Astrocyte of the cerebellum (primary cell): ENCODE measurements at regions of chr4 and their contacts with region 1.

Region 1: GRCh38 chr4:78268597-78268996 is 211.5 kb downstream of the FRAS1 start:
- DNase-seq: no peak
- H3K4me3 ChIP-seq: no peak overlapping the region
- CTCF ChIP-seq: no peak

Region 2: DNA sequence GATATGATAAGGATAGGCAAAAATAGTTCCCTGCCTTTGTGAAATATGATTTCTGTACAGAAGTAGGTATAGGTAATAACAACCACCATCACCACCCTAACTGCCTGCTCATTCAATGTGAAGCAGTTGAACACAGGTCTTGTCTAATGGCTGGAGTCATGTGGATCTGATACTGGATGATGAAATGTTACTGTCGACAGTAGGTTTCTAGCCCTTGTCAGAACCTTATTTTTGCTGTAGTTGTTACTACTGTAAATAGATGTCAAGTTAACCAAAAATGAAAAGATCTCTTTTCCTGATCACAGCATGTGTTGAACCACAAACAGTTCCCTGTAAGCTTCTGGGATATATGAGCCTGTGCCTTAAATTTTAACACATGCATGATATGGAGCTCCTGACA is 68.6 kb before region 1 on chr4:
- in situ Hi-C with region 1: loop called (anchors 5 kb)
- DNase-seq: no peak
- H3K4me3 ChIP-seq: no peak overlapping the region
- CTCF ChIP-seq: no peak

Region 3: GRCh38 chr4:78227411-78228057 is 41.1 kb before region 1 on chr4:
- in situ Hi-C with region 1: no loop called
- DNase-seq: no peak
- H3K4me3 ChIP-seq: no peak overlapping the region
- CTCF ChIP-seq: no peak